ENCODE measurements at regions of chr12 and their contacts with region 1.

Region 1: DNA sequence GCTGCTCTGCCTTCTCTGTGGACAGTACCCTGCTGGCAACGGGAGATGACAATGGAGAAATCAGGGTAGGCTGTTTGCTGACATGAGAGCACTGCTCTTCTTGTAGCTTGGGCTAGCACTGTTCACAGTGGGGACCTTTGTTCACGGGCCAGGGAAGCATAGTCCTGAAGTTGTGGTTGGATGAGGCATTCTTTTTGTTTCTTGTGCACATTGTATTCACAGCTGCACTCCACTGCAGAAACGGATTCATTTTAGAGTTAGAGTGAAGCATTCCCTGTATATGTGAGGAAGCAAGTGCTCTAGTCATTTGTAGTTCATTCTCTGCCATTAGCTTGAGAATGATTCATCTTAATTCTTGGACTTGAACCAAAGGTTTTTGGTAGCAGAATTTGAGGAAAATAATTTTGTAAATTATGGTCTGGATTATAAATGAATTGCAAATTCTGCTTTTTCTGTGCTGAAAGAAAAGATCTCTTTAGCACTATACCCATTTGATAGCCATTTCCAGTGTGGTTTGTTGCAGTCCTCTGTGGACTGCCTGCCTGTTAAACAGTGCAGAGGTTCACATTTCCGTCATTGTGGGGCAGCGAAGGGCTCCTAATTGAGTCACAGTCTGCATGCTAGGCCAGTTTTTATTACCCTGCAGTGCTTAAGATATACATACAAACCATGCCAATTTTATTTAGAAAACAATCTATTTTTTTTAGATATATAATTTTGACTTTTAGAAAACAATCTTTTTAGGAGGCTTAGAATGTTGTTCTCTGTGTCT is 80.6 kb downstream of the APAF1 start:
- DNase-seq: peak; percentile 60 to 68
- H3K4me3 ChIP-seq: no peak overlapping the region
- H3K4me3 Mint-ChIP-seq: no peak overlapping the region
- H3K27ac Mint-ChIP-seq: no peak overlapping the region
- H3K4me1 ChIP-seq: no peaks in the 10 kb centered on the region
- H3K4me1 Mint-ChIP-seq: no peaks in the 10 kb centered on the region
- H3K27me3 ChIP-seq: no peaks in the 10 kb centered on the region
- H3K27me3 Mint-ChIP-seq: no peaks in the 10 kb centered on the region
- CTCF ChIP-seq: peak; percentile 51 to 71

Region 2: DNA sequence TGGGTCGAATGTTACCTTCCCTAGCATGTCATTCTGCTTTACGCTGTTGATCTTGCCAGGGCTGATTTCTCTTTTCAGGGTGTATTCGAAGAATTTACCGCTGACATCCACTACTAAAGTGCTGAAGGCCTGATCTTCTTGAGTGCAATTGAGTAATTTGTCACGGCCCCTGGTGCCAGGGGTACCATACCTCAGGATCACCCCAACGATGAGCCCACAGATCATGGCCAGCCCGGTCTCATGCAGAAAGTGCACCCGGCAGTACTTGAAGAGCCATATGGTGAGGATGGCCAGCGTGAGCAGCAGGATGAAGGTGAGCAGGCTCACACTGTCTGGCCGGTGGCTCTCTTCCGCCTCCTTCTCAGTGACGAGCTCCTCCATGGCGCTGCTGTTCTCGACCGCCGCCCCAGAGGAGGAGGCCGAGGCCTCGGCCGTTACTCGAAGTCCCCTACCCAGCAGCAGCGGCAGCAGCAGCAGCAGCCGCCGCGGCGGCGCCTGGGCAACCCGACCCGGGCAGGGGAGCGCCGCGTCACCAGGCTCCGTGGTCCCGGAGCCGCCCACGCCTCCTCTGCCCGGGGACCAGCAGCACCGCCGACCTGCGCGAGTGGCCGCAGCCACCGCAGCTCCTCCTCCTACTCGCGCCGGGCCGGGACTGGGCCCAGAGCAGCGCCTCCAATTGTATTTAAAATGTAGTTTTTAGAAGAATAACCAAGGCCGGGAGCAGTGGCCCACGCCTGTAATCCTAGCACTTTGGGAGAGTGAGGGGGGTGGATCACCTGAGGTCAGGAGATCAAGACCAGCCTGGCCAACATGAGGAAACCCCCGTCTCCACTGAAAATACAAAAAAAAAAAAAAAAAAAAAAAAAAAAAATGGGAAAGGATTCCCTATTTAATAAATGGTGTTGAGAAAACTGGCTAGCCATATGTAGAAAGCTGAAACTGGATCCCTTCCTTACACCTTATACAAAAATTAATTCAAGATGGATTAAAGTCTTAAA is 268.8 kb before region 1 on chr12:
- CTCF ChIA-PET with region 1: interaction called, 11 read pairs
- POLR2A ChIA-PET with region 1: no interaction called
- intact Hi-C with region 1: no loop called
- DNase-seq: peak; percentile 40 to 62
- H3K4me3 ChIP-seq: peak overlapping the region; percentile 39
- H3K4me3 Mint-ChIP-seq: peak overlapping the region; percentile 78
- H3K27ac Mint-ChIP-seq: peak overlapping the region; percentile 50
- H3K4me1 ChIP-seq: no peaks in the 10 kb centered on the region
- H3K4me1 Mint-ChIP-seq: no peaks in the 10 kb centered on the region
- H3K27me3 ChIP-seq: no peaks in the 10 kb centered on the region
- H3K27me3 Mint-ChIP-seq: no peaks in the 10 kb centered on the region
- CTCF ChIP-seq: no peak

Region 3: DNA sequence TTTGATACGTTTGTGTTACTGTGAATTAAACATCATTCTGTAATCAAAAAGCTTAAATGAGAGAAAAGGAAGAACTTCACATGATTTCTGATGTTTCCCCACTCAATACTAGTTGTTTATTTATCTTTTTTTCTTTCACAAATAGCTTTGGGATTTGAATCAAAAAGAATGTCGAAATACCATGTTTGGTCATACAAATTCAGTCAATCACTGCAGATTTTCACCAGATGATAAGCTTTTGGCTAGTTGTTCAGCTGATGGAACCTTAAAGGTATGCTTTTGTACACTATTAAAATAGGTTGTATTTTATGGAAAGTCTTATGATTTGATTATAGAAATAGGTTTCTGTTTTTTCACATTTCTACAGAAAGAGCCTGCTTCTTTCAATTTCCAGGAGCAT is 39.1 kb before region 1 on chr12:
- CTCF ChIA-PET with region 1: no interaction called
- POLR2A ChIA-PET with region 1: no interaction called
- intact Hi-C with region 1: no loop called
- DNase-seq: no peak
- H3K4me3 ChIP-seq: no peak overlapping the region
- H3K4me3 Mint-ChIP-seq: no peak overlapping the region
- H3K27ac Mint-ChIP-seq: no peak overlapping the region
- H3K4me1 ChIP-seq: no peaks in the 10 kb centered on the region
- H3K4me1 Mint-ChIP-seq: no peaks in the 10 kb centered on the region
- H3K27me3 ChIP-seq: no peaks in the 10 kb centered on the region
- H3K27me3 Mint-ChIP-seq: no peaks in the 10 kb centered on the region
- CTCF ChIP-seq: no peak

Region 4: GRCh38 chr12:98714426-98714825 is 11.2 kb before region 1 on chr12:
- CTCF ChIA-PET with region 1: no interaction called
- POLR2A ChIA-PET with region 1: no interaction called
- intact Hi-C with region 1: no loop called
- DNase-seq: no peak
- H3K4me3 ChIP-seq: no peak overlapping the region
- H3K4me3 Mint-ChIP-seq: no peak overlapping the region
- H3K27ac Mint-ChIP-seq: no peak overlapping the region
- H3K4me1 ChIP-seq: no peaks in the 10 kb centered on the region
- H3K4me1 Mint-ChIP-seq: no peaks in the 10 kb centered on the region
- H3K27me3 ChIP-seq: no peaks in the 10 kb centered on the region
- H3K27me3 Mint-ChIP-seq: no peaks in the 10 kb centered on the region
- CTCF ChIP-seq: no peak

Region 5: DNA sequence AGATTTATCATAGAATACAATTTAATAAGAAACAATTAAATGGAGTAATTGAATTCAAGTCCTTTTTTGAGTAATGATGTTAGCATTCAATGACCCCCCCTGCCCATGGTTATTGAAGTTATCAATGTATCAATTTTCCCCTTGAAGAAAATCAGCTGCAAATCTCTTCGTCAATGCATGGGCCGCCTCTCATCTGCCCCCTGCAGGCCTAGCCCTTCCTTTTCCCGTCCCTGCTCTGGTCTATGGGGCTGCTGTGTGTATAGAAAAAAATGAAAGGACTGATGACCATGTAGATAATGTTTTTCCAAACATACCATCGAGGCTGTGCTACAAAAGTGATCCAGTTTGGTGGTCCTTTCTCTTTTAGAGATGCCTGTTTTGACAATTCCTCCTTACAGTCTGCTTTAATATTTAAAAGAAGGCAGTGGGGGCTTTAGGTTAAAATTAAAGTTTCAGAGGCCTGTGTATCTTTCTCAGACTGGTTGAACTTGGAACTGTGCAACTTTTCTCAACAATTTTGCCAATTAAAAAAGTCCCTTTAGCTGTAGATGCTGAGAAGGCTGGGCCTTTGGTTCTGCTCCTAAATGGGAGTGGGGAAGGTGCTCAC is 17.8 kb after region 1 on chr12:
- CTCF ChIA-PET with region 1: interaction called, 3 read pairs
- POLR2A ChIA-PET with region 1: no interaction called
- intact Hi-C with region 1: loop called (anchors 2 kb)
- DNase-seq: peak in 1 of 2 experiments; percentile 58
- H3K4me3 ChIP-seq: no peak overlapping the region
- H3K4me3 Mint-ChIP-seq: no peak overlapping the region
- H3K27ac Mint-ChIP-seq: no peak overlapping the region
- H3K4me1 ChIP-seq: no peaks in the 10 kb centered on the region
- H3K4me1 Mint-ChIP-seq: peaks cover 6% of the 10 kb centered on the region
- H3K27me3 ChIP-seq: no peaks in the 10 kb centered on the region
- H3K27me3 Mint-ChIP-seq: peaks cover 32% of the 10 kb centered on the region
- CTCF ChIP-seq: peak; percentile 51 to 79

Region 6: GRCh38 chr12:98799146-98799810 is 73.6 kb after region 1 on chr12:
- CTCF ChIA-PET with region 1: no interaction called
- POLR2A ChIA-PET with region 1: no interaction called
- intact Hi-C with region 1: loop called (anchors 1 kb)
- DNase-seq: peak in 1 of 2 experiments; percentile 38
- H3K4me3 ChIP-seq: no peak overlapping the region
- H3K4me3 Mint-ChIP-seq: no peak overlapping the region
- H3K27ac Mint-ChIP-seq: no peak overlapping the region
- H3K4me1 ChIP-seq: no peaks in the 10 kb centered on the region
- H3K4me1 Mint-ChIP-seq: no peaks in the 10 kb centered on the region
- H3K27me3 ChIP-seq: no peaks in the 10 kb centered on the region
- H3K27me3 Mint-ChIP-seq: peaks cover 17% of the 10 kb centered on the region
- CTCF ChIP-seq: no peak

Region 7: GRCh38 chr12:98828802-98829600 is 103.3 kb after region 1 on chr12:
- CTCF ChIA-PET with region 1: no interaction called
- POLR2A ChIA-PET with region 1: no interaction called
- intact Hi-C with region 1: no loop called
- DNase-seq: peak in 1 of 2 experiments; percentile 6
- H3K4me3 ChIP-seq: no peak overlapping the region
- H3K4me3 Mint-ChIP-seq: peak overlapping the region; percentile 21
- H3K27ac Mint-ChIP-seq: no peak overlapping the region
- H3K4me1 ChIP-seq: peaks cover 15% of the 10 kb centered on the region
- H3K4me1 Mint-ChIP-seq: no peaks in the 10 kb centered on the region
- H3K27me3 ChIP-seq: no peaks in the 10 kb centered on the region
- H3K27me3 Mint-ChIP-seq: peaks cover 3% of the 10 kb centered on the region
- CTCF ChIP-seq: no peak

Region 8: GRCh38 chr12:98939350-98939749 is 213.7 kb after region 1 on chr12:
- CTCF ChIA-PET with region 1: no interaction called
- POLR2A ChIA-PET with region 1: no interaction called
- intact Hi-C with region 1: loop called (anchors 1 kb)
- DNase-seq: peak in 1 of 2 experiments; percentile 21
- H3K4me3 ChIP-seq: no peak overlapping the region
- H3K4me3 Mint-ChIP-seq: no peak overlapping the region
- H3K27ac Mint-ChIP-seq: no peak overlapping the region
- H3K4me1 ChIP-seq: no peaks in the 10 kb centered on the region
- H3K4me1 Mint-ChIP-seq: peaks cover 6% of the 10 kb centered on the region
- H3K27me3 ChIP-seq: no peaks in the 10 kb centered on the region; the same call in 1 of the 2 replicates
- H3K27me3 Mint-ChIP-seq: peaks cover 16% of the 10 kb centered on the region
- CTCF ChIP-seq: peak; percentile 32 to 53